ENCODE measurements at regions of chr5 and their contacts with region 1.

Region 1: GRCh38 chr5:16713386-16713928 is 96.7 kb upstream of the RETREG1 start:
- DNase-seq: no peak
- H3K4me3 ChIP-seq: no peak overlapping the region
- H3K27ac ChIP-seq: no peak overlapping the region
- H3K27me3 ChIP-seq: no peaks in the 10 kb centered on the region
- CTCF ChIP-seq: no peak

Region 2: DNA sequence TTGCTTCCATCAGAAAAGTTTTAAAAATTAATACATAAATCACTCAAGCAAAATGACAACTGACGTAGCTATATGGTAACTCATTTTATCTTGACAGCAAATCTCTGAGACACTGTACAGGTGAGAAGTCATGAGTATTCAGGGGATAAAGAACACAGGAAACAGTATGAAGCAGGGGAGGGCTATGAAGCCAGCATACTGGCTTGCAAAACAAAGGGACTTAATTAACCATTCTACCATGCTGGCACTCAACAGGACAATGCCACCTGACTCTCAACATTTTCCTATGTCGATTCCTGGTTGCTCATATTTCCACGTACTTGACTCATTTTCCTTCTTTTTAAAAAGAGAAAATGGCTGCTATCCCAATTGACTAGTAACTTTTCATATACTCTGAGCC is 54.7 kb after region 1 on chr5:
- CTCF ChIA-PET with region 1: no interaction called
- POLR2A ChIA-PET with region 1: interaction called, 14 read pairs
- DNase-seq: no peak
- H3K4me3 ChIP-seq: no peak overlapping the region
- H3K27ac ChIP-seq: no peak overlapping the region
- H3K27me3 ChIP-seq: no peaks in the 10 kb centered on the region
- CTCF ChIP-seq: no peak

Measured in AG04450 (cell line).